Caco-2 (cell line): ENCODE measurements at regions of chr1 and their contacts with region 1.

Region 1: GRCh38 chr1:111346089-111346885 is 55.6 kb downstream of the CHIA start:
- DNase-seq: peak; percentile 90 to 91
- H3K4me3 ChIP-seq: peak overlapping the region; percentile 37
- H3K4me3 Mint-ChIP-seq: peak overlapping the region; percentile 91
- H3K27ac Mint-ChIP-seq: peak overlapping the region; percentile 81
- H3K4me1 ChIP-seq: 0 out of 2 replicates have a peak, but pooled peaks cover 5% of the 10 kb centered on the region
- H3K4me1 Mint-ChIP-seq: peaks cover 19% of the 10 kb centered on the region
- H3K27me3 ChIP-seq: no peaks in the 10 kb centered on the region
- H3K27me3 Mint-ChIP-seq: no peaks in the 10 kb centered on the region
- CTCF ChIP-seq: peak; percentile 17 to 18

Region 2: DNA sequence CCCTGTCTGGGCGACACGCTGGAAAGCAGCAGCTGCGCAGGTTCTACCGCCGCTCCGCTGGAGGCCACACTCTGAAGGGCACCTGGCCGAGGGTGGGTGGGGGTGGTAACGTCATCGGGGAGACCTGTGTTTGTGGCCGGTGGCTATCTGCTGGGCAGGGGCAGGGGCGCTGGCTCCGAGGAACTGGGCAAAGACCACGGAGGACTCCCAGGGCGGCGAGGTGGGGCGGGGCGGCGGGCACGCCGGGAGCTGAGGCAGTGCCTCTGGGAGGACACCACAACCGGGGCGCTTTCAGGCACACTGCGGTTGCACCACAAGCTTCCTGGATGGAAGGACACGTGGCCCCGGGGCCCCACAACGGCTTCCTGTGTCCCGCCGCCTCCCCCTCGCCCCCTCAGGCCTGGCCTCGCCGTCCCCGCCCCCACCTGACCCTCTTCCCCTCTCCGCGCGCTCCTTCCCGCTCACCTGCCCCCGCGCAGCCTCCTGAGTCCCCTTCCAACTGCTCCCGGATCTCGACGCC is 142.5 kb before region 1 on chr1:
- CTCF ChIA-PET with region 1: no interaction called
- POLR2A ChIA-PET with region 1: no interaction called
- intact Hi-C with region 1: no loop called
- DNase-seq: peak; percentile 80 to 89
- H3K4me3 ChIP-seq: peak overlapping the region; percentile 54
- H3K4me3 Mint-ChIP-seq: peak overlapping the region; percentile 77
- H3K27ac Mint-ChIP-seq: peak overlapping the region; percentile 49
- H3K4me1 ChIP-seq: peaks cover 34% of the 10 kb centered on the region
- H3K4me1 Mint-ChIP-seq: peaks cover 14% of the 10 kb centered on the region
- H3K27me3 ChIP-seq: no peaks in the 10 kb centered on the region
- H3K27me3 Mint-ChIP-seq: no peaks in the 10 kb centered on the region
- CTCF ChIP-seq: no peak

Region 3: DNA sequence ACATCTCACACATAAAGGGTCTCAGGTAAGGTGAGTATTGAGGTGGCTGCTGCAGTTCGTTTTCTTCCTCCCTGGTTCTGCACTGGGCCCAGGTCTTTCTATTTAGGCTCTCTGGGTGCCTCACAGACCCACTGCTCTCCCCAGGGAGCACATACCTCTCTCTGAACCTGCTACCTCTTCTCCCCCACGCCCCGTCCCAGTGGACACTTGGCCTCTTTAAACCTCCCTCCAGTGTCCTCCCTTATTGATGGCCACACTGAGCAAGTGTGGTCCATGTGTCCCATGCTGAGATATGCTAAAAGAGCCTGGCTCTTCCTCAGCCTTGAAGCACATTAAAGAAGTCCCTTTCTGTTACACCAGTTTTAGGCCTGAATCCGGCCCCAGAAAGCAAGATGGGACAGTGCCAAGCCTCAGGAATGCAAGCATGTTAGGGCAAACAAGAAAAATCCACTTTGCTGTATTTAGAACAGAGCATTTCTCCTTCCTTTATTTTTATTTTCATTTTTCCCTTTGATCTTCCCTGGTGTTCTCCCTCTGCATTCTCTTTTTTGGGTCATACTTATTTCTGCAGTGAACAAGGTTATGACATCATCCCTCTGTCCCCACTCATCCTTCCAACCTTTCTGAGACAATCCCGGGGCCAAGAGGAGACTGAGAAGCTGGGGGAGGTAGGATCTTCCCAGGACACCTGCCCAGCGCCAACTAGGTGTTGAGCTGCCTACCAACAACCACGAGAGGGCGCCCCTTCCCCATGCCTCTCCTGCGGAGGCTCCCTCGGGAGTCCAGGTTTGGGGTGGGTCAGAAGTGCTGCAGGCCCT is 123.8 kb before region 1 on chr1:
- CTCF ChIA-PET with region 1: no interaction called
- POLR2A ChIA-PET with region 1: no interaction called
- intact Hi-C with region 1: loop called (anchors 5 kb)
- DNase-seq: peak; percentile 79 to 80
- H3K4me3 ChIP-seq: no peak overlapping the region
- H3K4me3 Mint-ChIP-seq: no peak overlapping the region
- H3K27ac Mint-ChIP-seq: peak overlapping the region; percentile 21
- H3K4me1 ChIP-seq: peaks cover 13% of the 10 kb centered on the region
- H3K4me1 Mint-ChIP-seq: peaks cover 18% of the 10 kb centered on the region
- H3K27me3 ChIP-seq: no peaks in the 10 kb centered on the region
- H3K27me3 Mint-ChIP-seq: no peaks in the 10 kb centered on the region
- CTCF ChIP-seq: peak; percentile 69 to 74

Region 4: DNA sequence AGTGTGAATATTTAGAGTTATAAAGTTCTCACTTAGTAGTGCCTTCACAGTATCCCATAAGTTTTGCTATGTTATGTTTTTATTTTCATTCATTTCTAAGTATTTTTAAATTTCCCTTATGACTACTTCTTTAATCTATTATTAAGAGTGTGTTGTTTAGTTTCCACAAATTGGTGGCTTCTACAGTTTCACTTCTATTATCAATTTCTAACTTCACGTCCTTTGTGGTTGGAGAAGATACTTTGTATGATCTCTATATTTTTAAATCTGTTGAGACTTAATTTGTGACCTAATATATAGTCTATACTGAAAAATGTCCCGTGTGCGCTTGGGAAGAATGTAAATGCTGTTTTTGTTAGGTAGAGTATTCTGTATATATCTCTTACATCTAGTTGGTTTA is 43.9 kb before region 1 on chr1:
- CTCF ChIA-PET with region 1: no interaction called
- POLR2A ChIA-PET with region 1: no interaction called
- intact Hi-C with region 1: no loop called
- DNase-seq: no peak
- H3K4me3 ChIP-seq: no peak overlapping the region
- H3K4me3 Mint-ChIP-seq: no peak overlapping the region
- H3K27ac Mint-ChIP-seq: no peak overlapping the region
- H3K4me1 ChIP-seq: no peaks in the 10 kb centered on the region
- H3K4me1 Mint-ChIP-seq: no peaks in the 10 kb centered on the region
- H3K27me3 ChIP-seq: no peaks in the 10 kb centered on the region
- H3K27me3 Mint-ChIP-seq: no peaks in the 10 kb centered on the region
- CTCF ChIP-seq: no peak

Region 5: GRCh38 chr1:111364690-111365089 is 18.4 kb after region 1 on chr1:
- CTCF ChIA-PET with region 1: no interaction called
- POLR2A ChIA-PET with region 1: no interaction called
- intact Hi-C with region 1: loop called (anchors 1 kb)
- DNase-seq: peak in 1 of 2 experiments; percentile 46
- H3K4me3 ChIP-seq: no peak overlapping the region
- H3K4me3 Mint-ChIP-seq: no peak overlapping the region
- H3K27ac Mint-ChIP-seq: no peak overlapping the region
- H3K4me1 ChIP-seq: peaks cover 20% of the 10 kb centered on the region
- H3K4me1 Mint-ChIP-seq: peaks cover 27% of the 10 kb centered on the region
- H3K27me3 ChIP-seq: no peaks in the 10 kb centered on the region
- H3K27me3 Mint-ChIP-seq: no peaks in the 10 kb centered on the region
- CTCF ChIP-seq: no peak

Region 6: DNA sequence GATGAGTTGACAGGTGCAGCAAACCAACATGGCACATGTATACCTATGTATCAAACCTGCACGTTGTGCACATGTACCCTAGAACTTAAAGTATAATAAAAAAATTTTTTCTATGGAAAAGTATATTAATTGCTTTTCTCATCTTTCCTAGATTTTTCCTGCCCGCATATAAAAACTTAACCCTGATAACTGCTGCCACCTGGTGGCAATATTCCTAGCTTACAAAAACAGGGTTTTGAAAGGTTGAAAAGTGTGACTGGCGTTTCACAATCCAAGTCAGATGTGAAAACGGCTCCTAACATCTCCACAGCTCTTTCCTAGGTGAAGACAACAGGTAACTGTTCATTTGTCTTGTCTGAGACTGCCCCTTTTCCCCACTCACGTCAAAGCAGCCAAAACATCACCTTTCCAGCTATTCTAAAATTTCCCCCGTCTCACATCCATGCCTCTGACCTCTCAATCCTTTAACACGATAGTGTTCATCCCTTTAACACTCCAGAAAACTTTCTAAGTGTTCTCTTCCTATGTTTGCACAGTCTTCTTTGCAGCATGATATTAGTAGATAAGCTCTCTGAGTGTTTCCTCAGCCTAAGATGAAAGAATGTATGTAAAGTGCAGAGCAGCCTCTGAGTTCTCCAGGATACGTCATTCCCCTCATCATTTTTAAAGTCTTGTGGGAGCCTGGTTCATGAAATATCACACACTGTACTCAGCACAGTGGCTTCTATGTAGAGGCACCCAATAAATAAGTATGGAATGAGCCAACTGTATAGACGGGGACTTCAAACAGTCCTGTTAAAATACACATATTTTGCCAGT is 53.7 kb after region 1 on chr1:
- CTCF ChIA-PET with region 1: no interaction called
- POLR2A ChIA-PET with region 1: interaction called, 4 read pairs
- intact Hi-C with region 1: loop called (anchors 5 kb)
- DNase-seq: peak in 1 of 2 experiments; percentile 60
- H3K4me3 ChIP-seq: no peak overlapping the region
- H3K4me3 Mint-ChIP-seq: no peak overlapping the region
- H3K27ac Mint-ChIP-seq: no peak overlapping the region
- H3K4me1 ChIP-seq: peaks cover 3% of the 10 kb centered on the region; the same call in 1 of the 2 replicates
- H3K4me1 Mint-ChIP-seq: peaks cover 7% of the 10 kb centered on the region
- H3K27me3 ChIP-seq: no peaks in the 10 kb centered on the region
- H3K27me3 Mint-ChIP-seq: no peaks in the 10 kb centered on the region
- CTCF ChIP-seq: peak; percentile 28 to 31